Heart right ventricle (tissue), 16 donors: ENCODE measurements at regions of chr1 and their contacts with region 1.

Region 1: DNA sequence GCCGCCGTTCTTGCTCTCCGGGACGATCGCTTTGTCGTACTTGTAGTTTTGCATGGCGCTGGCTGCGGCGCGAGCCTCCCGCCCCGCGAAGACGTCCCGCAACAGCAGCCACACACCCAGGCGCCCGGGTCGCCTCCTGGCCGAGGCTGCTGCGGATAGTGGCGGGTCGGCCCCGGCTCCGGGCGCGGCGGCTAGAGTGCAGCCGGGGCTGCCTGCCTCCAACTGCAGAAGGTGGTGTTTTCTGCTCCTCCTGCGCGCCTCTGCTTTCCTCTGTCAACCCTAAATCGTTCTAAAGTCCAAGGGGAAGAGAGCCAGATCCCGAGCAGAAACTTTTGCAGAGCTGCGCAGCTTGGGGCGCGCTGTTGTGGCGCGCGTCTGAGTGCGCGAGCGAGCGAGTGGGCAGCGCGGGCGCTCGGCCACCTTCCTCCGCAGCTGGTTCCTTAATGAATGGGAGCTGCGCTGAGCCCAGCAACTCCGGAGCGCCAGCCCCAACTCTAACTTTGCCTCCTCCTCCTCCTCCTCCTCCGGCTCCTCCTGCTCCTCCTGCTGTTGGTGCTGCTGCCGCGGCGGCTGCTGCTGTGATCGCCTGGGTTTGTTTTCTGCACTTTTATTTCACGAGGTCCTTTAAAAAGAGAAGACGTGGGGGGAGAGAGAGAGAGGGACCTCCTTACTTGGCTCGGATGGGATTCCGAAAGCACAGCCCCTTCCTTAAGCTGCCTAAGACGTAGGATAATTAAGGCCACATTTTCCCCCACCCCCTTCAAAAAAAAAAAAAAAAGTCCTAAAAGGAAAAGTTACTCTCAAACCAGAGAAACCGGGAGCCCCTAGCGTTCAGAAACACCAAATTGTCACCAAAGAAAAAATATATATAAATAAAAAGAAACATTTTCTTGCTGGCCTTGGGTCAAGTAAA is at the start of gene PLPP3:
- DNase-seq: peak; percentile 86 to 89
- ATAC-seq: peak; percentile 84 to 93 (median 88)
- H3K4me3 ChIP-seq: peak within 1 kb of the TSS; percentile 75 to 98 (median 94)
- H3K27ac ChIP-seq: peak within 1 kb of the TSS; percentile 93 to 99 (median 98)
- H3K4me1 ChIP-seq: peaks cover 0 to 46% (median 21%) of the 10 kb centered on the region in 9 donors
- H3K27me3 ChIP-seq: no peaks in the 10 kb centered on the region
- CTCF ChIP-seq: peak; percentile 23 to 71 (median 51)
- total RNA-seq, gene PLPP3: 59.4 to 136 (median 81.4) TPM

Region 2: DNA sequence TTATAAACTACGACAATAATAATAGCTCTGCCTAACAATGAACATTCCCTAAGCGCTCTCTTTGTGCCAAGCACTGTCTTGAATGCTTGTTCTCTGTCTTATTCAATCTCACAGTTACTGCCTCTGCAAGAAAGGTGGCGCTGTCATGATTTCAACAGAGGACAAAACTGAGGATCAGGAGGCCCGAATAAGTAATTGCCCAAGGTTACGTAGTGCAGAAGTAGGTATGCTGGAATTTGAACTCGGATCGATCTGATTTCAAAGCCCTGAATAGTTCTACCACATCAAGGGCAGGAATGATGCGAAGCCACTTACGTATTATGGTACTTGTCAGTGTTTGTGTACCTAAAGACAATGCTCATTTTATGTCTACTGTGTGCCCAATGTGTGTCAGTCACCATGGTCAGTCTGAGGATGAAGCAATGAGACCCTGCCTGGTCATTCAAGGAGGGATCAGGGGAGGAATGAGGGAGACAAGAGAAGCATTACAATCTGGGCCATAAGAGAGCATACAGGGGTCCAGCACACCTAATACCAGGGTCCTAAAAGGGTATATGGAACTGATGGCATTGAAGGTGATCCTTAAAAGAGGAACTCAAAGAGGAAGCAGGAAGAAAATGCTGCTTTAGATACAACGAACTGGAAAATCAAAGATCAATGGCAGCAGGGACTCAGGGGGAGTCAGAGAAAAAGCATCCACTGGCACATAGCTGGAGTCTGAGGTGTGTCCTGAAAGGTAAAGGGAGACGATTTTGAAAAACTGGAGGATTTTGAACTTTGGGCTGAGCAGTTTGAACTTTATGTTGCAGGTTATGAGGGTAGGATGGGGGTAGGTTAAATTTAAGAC is 389.1 kb before region 1 on chr1:
- intact Hi-C with region 1: loop called in 7 of 10 experiments (anchors 5 to 10 kb)
- DNase-seq: peak in 1 of 2 donors; percentile 40
- ATAC-seq: peak in 7 of 8 donors; percentile 63 to 92 (median 81)
- H3K4me3 ChIP-seq: no peak overlapping the region
- H3K27ac ChIP-seq: peak overlapping the region in 5 of 10 donors; percentile 35 to 54 (median 38)
- H3K4me1 ChIP-seq: peaks cover 0 to 39% (median 19%) of the 10 kb centered on the region in 9 donors
- H3K27me3 ChIP-seq: no peaks in the 10 kb centered on the region
- CTCF ChIP-seq: peak; percentile 11 to 70 (median 51)

Region 3: DNA sequence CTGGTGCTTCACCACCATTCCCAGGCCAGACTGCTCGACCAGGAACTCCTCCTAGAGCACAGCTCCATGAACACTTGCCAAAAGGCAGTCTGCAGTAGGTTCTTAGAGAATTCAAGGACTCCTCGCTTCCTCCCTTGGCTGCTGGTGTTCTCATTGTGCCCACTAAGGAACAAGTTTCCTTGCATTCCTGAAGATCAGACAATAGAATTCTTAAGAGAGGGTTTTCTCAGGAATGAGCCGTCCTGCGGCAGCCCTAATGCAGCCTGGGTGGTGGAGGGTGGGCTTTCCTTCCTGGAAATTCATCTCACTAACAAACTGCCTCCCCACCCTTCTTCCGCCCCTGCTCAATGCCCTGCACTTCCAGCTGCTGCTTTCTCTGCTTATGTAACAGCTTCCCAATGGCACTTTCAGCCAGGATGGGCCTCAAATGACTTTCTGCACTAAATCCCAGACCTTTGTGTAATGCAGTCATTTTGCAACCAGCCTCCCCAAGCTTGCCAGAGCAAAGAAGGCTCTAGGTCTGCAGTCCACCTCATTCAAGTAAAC is 287.8 kb before region 1 on chr1:
- intact Hi-C with region 1: loop called in 3 of 10 experiments (anchors 5 to 10 kb)
- DNase-seq: peak; percentile 16 to 40
- ATAC-seq: peak; percentile 67 to 90 (median 80)
- H3K4me3 ChIP-seq: no peak overlapping the region
- H3K27ac ChIP-seq: peak overlapping the region in 7 of 10 donors; percentile 10 to 73 (median 42)
- H3K4me1 ChIP-seq: peaks cover 0 to 39% (median 10%) of the 10 kb centered on the region in 9 donors
- H3K27me3 ChIP-seq: no peaks in the 10 kb centered on the region
- CTCF ChIP-seq: no peak

Region 4: GRCh38 chr1:56416471-56416882 is 162.7 kb before region 1 on chr1:
- intact Hi-C with region 1: loop called in 6 of 10 experiments (anchors 5 kb)
- DNase-seq: no peak
- ATAC-seq: no peak
- H3K4me3 ChIP-seq: no peak overlapping the region
- H3K27ac ChIP-seq: no peak overlapping the region
- H3K4me1 ChIP-seq: peaks cover 5 to 66% (median 15%) of the 10 kb centered on the region in 9 donors
- H3K27me3 ChIP-seq: no peaks in the 10 kb centered on the region
- CTCF ChIP-seq: no peak

Region 5: DNA sequence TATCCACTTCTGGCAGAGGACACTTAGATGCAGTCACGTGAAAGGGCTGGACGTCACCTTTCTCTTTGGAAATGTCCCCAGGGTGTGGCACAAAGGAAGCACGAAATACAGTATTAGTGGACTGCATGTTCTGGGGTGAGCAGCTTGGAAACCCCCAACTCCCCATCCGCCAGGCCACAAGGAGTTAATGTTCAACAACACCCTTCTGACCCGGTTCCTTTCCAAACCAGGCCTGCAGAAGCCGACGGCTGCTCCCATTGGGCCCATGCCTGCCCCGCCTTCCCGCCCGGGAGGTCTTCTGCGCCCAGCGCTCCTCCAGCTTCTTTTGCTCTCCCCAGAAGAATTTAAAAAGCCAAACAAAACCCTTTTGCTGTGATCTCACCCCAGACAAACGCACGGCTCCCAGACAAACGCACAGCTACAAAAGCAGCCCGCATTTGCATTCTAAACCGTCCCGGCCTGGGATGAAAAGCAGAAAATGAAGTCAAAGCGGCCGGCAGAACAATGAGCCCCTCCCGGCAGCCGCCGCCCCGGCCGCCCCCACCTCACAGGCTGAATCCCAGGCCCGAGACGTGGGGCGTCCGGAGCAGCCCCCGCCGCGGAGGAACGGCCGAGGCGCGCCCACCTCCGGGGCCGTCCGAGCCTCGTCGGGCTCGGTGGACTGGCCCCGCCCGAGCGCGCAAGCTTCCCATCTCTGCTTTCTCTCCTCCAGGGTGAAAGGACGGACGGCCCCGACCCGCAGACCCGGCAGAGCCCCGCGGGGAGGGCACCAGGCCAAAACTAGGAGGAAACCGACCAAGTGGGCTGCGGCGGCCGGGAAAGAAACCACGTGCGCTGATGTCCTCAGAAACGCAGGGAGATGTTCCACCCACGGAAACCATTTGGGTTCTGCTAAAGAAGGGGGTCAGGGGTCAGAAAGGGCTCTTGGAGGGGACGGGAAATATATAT is 101.8 kb before region 1 on chr1:
- intact Hi-C with region 1: loop called in 3 of 10 experiments (anchors 1 to 10 kb)
- DNase-seq: peak; percentile 73 to 79
- ATAC-seq: peak; percentile 83 to 94 (median 89)
- H3K4me3 ChIP-seq: peak overlapping the region; percentile 54 to 79 (median 68)
- H3K27ac ChIP-seq: peak overlapping the region; percentile 72 to 97 (median 92)
- H3K4me1 ChIP-seq: peaks cover 0 to 41% (median 14%) of the 10 kb centered on the region in 9 donors
- H3K27me3 ChIP-seq: peaks cover 0 to 3% (median 0%) of the 10 kb centered on the region in 7 donors
- CTCF ChIP-seq: no peak

Region 6: DNA sequence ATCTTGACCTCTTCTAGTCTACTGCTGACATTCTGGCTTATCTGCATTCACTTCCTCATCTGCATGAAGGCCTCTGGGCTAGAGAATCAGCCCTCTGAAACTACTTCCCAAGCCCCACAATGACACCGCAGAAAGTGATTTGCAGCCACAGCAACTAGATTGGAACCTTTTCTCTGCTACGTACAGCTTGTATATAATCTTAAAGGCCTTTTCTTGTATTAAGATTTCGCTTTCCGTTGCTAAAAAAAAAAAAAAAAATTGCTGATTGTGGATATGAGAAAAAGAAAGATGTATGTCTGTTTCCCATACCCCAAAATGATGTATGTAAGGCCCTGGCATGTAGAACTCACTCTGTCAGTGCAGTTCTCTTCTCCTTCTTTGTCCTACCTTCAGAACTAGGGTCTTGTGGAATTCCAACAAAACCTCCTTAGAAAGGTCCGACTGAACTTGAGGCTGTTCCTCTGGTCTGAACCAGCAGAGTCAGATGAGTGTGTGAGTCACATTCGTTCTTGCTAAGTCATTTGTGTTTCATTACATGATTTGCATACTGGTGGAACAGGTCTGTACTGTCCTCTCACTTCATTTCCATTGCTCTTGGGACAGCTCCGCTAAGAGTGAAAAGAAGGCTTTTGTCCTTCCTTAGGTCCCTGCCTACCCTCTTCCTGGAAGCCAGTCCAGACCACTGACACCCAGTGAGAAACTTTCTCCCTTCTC is 62.5 kb before region 1 on chr1:
- intact Hi-C with region 1: loop called in 5 of 10 experiments (anchors 5 to 10 kb)
- DNase-seq: no peak
- ATAC-seq: peak in 6 of 8 donors; percentile 12 to 67 (median 26)
- H3K4me3 ChIP-seq: no peak overlapping the region
- H3K27ac ChIP-seq: peak overlapping the region in 9 of 10 donors; percentile 24 to 87 (median 53)
- H3K4me1 ChIP-seq: peaks cover 14 to 92% (median 78%) of the 10 kb centered on the region in 9 donors
- H3K27me3 ChIP-seq: no peaks in the 10 kb centered on the region
- CTCF ChIP-seq: no peak

Region 7: GRCh38 chr1:56654126-56654923 is 75.1 kb after region 1 on chr1:
- intact Hi-C with region 1: no loop called
- DNase-seq: no peak
- ATAC-seq: peak in 7 of 8 donors; percentile 52 to 92 (median 76)
- H3K4me3 ChIP-seq: peak overlapping the region in 2 of 10 donors; percentile 4 to 17
- H3K27ac ChIP-seq: peak overlapping the region; percentile 57 to 91 (median 82)
- H3K4me1 ChIP-seq: peaks cover 0 to 12% (median 0%) of the 10 kb centered on the region in 9 donors
- H3K27me3 ChIP-seq: no peaks in the 10 kb centered on the region
- CTCF ChIP-seq: no peak